Testis (tissue), 5 donors: ENCODE measurements at regions of chr2 and their contacts with region 1.

Region 1: DNA sequence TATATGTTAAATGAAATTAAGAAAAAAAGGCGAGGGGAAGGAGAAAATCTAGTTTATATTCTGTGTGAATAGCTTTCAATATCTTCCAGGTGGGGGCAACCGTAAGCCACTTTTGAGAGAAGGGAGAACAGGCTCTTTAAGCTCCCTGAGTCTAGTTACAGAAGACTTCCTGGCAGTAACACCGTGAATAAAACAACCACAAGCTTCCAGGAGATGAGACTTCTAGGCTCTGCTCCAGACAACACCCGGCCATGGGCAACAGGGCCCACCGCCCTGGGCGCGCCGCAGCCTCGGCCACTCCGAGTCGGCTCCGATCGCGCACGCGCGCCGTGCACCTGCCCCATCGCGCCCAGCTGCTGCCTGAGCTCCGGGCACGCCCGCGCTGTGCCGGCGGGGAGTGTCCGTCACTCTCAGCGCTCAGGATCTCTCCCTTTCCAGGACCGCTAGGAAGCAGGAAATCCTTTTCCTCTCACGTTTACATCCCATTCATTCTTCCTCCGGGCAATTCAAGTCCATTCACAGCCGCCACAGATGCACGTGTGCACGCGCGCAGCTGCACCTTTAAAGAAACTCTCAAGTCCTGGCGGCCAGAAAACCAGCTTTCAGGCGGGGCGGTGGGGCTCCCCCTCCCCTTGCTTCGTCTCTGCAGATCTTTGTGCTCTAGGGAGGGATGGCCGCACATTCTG is 19.4 kb upstream of the PAX3 start:
- DNase-seq: peak; percentile 78
- H3K4me3 ChIP-seq: peak overlapping the region; percentile 22 to 53
- H3K27ac ChIP-seq: no peak overlapping the region
- H3K4me1 ChIP-seq: no peaks in the 10 kb centered on the region
- H3K27me3 ChIP-seq: no peaks in the 10 kb centered on the region
- CTCF ChIP-seq: peak; percentile 33 to 46 (median 39)
- POLR2A ChIP-seq: no peak

Region 2: DNA sequence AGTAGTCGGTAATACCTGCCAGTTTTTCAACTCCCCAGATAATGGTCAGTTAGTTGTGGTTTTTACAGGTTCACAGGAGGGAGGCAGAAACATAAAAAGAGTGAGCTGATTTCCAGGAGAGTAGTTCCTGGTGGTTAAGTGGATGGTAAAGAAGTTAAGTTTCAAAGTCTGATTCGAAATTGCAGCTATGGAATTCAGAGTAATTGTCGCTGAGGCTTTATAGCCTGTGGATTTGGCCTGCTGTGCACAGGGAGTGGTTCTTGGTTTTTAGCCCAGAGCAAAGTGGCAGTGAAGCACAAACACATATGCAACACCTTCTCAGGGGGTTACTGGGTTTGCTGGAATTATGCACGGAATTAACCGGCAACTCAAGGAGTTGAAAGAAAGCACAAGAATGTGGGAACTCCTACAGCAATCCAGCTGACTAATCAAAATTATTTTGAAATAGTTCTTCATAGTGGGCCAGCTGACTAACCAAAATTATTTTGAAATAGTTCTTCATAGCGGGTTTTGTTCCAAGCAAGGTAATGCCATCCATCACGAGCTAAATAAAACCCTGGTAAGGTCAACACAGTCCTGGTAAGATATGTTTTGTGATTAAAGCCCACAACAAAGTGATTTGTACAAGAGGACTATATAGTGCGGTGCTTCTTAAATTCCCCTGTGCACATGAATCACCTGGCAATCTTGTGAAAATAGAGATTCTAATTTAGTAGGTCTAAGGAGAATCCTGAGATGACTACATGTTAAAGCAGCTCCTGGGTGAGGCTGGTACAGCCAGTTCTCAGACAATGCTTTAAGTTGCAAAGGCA is 200.6 kb after region 1 on chr2:
- intact Hi-C with region 1: no loop called
- DNase-seq: no peak
- H3K4me3 ChIP-seq: no peak overlapping the region
- H3K27ac ChIP-seq: no peak overlapping the region
- H3K4me1 ChIP-seq: no peaks in the 10 kb centered on the region
- H3K27me3 ChIP-seq: no peaks in the 10 kb centered on the region
- CTCF ChIP-seq: no peak
- POLR2A ChIP-seq: no peak

Region 3: GRCh38 chr2:222568865-222569264 is 250.7 kb after region 1 on chr2:
- intact Hi-C with region 1: loop called (anchors 5 kb)
- DNase-seq: peak; percentile 58
- H3K4me3 ChIP-seq: no peak overlapping the region
- H3K27ac ChIP-seq: no peak overlapping the region
- H3K4me1 ChIP-seq: peaks cover 10% of the 10 kb centered on the region
- H3K27me3 ChIP-seq: no peaks in the 10 kb centered on the region
- CTCF ChIP-seq: no peak
- POLR2A ChIP-seq: no peak

Region 4: GRCh38 chr2:222613715-222614331 is 295.7 kb after region 1 on chr2:
- intact Hi-C with region 1: loop called (anchors 5 kb)
- DNase-seq: peak; percentile 28
- H3K4me3 ChIP-seq: no peak overlapping the region
- H3K27ac ChIP-seq: no peak overlapping the region
- H3K4me1 ChIP-seq: no peaks in the 10 kb centered on the region
- H3K27me3 ChIP-seq: no peaks in the 10 kb centered on the region
- CTCF ChIP-seq: peak; percentile 47 to 76 (median 56)
- POLR2A ChIP-seq: no peak